Activated naive CD4-positive, alpha-beta T cell treated with anti-CD3 and anti-CD28 coated beads for 36 hours (primary cell): ENCODE measurements at regions of chr21 and their contacts with region 1.

Region 1: DNA sequence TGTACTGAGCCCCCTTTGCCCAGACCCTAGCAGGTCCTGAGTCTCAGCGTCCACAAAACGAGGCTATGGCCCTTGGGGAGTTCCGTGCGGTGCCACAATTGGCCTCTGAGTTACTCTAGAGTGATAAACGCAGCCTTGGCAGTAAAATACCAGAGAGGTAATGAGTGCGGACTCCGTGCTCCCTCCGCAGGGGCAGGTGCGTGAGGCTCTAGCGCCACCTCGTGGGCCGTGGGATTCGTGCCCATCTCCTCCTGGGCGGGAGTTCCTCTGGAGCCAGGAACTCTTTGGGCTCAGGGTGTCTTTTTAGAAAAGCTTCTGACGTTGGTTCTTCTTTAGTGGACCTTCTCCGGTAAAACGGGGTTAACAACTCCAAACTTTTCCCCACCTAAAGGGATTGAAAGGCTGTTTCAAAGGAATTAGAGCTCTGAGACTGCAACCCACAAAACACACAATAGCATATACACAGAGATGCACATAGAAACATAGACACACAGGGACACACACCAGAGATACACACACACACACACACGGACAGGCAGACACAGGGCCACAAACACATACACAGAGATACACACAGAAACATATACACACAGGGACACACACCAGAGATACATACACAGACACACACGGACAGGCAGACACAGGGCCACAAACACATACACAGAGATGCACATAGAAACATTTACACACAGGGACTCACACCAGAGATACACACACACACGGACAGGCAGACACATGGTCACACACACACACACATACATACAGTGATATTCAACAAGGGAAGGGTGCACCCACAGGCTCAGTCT is 99.4 kb downstream of the KCNJ15 start:
- DNase-seq: peak; percentile 84
- H3K4me3 Mint-ChIP-seq: no peak overlapping the region
- H3K27ac Mint-ChIP-seq: no peak overlapping the region
- H3K4me1 Mint-ChIP-seq: peaks cover 16% of the 10 kb centered on the region
- H3K27me3 Mint-ChIP-seq: peaks cover 2% of the 10 kb centered on the region

Region 2: GRCh38 chr21:37700641-37701202 is 655.5 kb before region 1 on chr21:
- CTCF ChIA-PET with region 1: interaction called, 3 read pairs
- intact Hi-C with region 1: loop called (anchors 1 kb)
- DNase-seq: peak; percentile 20
- H3K4me3 Mint-ChIP-seq: no peak overlapping the region
- H3K27ac Mint-ChIP-seq: no peak overlapping the region
- H3K4me1 Mint-ChIP-seq: no peaks in the 10 kb centered on the region
- H3K27me3 Mint-ChIP-seq: peaks cover 9% of the 10 kb centered on the region

Region 3: DNA sequence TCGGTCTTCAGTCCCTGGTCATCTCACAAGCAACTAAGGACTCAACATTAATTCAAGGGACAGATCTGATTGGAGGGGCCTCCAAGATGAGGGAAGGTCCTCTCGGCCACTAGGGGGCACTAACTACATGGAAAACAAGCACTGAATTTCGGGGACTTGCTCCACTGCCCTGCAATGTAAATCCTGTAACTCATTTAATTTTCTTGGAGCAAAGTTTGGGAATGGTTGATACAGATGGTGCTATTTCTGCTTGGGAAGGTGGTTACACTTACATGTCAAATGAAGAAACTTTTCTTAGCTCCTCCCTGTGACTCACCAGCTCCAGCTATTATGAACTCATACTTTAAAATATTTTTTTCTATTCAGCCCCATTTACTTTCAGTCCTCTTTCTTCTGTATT is 196.8 kb before region 1 on chr21:
- CTCF ChIA-PET with region 1: interaction called, 134 read pairs
- intact Hi-C with region 1: loop called (anchors 1 kb)
- DNase-seq: peak; percentile 76
- H3K4me3 Mint-ChIP-seq: no peak overlapping the region
- H3K27ac Mint-ChIP-seq: no peak overlapping the region
- H3K4me1 Mint-ChIP-seq: no peaks in the 10 kb centered on the region
- H3K27me3 Mint-ChIP-seq: peaks cover 16% of the 10 kb centered on the region

Region 4: GRCh38 chr21:38208118-38208517 is 148.1 kb before region 1 on chr21:
- CTCF ChIA-PET with region 1: interaction called, 127 read pairs
- intact Hi-C with region 1: no loop called
- DNase-seq: no peak
- H3K4me3 Mint-ChIP-seq: no peak overlapping the region
- H3K27ac Mint-ChIP-seq: no peak overlapping the region
- H3K4me1 Mint-ChIP-seq: peaks cover 4% of the 10 kb centered on the region
- H3K27me3 Mint-ChIP-seq: peaks cover 15% of the 10 kb centered on the region

Region 5: DNA sequence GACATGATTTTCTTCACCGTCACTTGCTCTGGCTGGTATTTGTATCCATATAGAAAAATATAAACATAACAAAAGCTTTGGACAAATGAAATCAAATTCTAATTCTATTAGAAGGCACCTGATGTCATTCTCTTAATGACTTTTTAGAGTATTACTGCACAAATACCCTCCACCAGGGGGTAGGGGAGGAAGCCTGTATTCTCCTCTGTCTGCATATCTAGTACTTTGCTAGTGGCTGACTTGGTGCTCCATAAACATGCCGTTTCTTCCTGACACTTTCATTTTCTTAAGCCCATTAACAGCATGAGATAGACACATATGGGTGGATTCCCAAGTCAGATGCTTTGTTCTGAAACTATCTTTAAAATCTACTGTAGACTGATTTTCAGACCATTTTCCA is 120.0 kb before region 1 on chr21:
- CTCF ChIA-PET with region 1: interaction called, 10 read pairs
- intact Hi-C with region 1: no loop called
- DNase-seq: no peak
- H3K4me3 Mint-ChIP-seq: no peak overlapping the region
- H3K27ac Mint-ChIP-seq: no peak overlapping the region
- H3K4me1 Mint-ChIP-seq: no peaks in the 10 kb centered on the region
- H3K27me3 Mint-ChIP-seq: no peaks in the 10 kb centered on the region

Region 6: GRCh38 chr21:38277501-38278131 is 78.6 kb before region 1 on chr21:
- CTCF ChIA-PET with region 1: interaction called, 8 read pairs
- intact Hi-C with region 1: loop called (anchors 1 kb)
- DNase-seq: peak; percentile 63
- H3K4me3 Mint-ChIP-seq: no peak overlapping the region
- H3K27ac Mint-ChIP-seq: peak overlapping the region; percentile 13
- H3K4me1 Mint-ChIP-seq: peaks cover 17% of the 10 kb centered on the region
- H3K27me3 Mint-ChIP-seq: no peaks in the 10 kb centered on the region

Region 7: DNA sequence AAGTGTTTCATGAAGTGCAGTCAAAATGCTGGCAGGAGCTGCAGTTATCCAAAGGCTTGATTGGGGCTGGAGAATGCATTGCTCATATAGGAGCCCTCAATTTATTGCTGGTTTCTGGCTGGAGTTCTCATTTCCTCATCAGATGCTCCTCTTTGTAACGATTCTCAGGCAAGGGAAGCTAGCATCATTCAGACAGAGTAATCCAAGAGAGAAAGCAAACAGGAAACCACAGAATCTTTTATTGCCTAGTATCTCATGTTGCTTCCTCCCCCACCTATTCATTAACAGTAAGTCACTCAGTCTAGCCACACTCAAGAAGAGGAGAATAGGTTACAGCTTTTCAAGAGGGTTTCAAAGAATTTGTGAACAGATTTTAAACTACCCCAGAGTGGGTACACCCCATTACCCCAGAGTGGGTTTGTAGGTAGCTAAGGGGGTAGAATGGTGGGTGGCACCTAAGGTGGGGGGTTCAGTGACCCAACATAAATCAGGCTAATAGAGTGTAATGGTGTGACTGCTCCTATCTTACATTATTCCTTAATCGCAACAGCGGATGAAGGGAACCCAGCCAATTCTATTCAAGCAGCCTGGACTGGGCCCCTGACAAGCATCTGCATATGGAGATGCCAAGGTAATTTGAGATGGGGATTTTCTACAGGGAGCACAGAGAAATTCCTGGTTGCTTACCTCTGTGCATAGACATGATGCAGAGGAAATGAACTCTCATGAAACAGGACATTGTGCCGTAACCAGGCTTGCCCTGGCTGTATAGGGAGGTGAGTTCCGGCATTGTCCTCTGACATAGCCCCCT is 32.3 kb before region 1 on chr21:
- CTCF ChIA-PET with region 1: interaction called, 16 read pairs
- intact Hi-C with region 1: loop called (anchors 2 kb)
- DNase-seq: no peak
- H3K4me3 Mint-ChIP-seq: no peak overlapping the region
- H3K27ac Mint-ChIP-seq: peak overlapping the region; percentile 17
- H3K4me1 Mint-ChIP-seq: peaks cover 36% of the 10 kb centered on the region
- H3K27me3 Mint-ChIP-seq: no peaks in the 10 kb centered on the region

Region 8: DNA sequence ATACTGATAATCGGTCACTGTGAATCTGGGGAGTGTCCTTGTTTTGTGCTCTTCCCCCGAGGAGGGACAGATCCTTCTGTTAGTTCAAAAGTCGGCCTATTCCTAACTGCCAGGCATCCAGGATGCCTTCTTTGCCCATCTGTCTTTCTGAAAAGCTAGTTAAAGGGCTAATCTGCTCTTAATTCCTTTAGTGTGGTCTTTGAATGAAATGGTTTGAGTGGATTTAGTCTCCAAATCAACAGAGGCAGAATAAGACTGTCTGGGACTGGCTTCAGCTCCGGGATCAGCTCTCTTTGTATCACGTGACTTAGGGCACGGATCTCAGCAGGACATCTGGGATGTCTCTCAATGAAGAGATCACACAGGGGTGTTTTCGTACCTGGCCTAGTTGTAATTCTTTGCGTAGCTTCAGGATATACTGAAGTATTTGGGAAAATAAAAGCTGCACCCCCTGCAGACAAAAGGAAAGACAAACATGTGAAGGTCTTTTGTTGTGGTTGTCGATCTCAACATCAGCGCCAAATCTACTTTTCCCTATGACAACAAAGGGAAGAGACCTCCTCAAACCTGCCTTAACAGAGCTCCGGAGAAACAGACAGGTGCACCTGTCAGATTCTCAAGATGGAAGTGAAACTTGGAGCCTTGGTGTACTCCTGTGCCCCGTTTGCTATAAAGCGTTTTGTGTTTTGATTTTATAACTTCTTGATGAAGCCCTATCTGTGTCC is 44.2 kb after region 1 on chr21:
- CTCF ChIA-PET with region 1: no interaction called
- intact Hi-C with region 1: no loop called
- DNase-seq: no peak
- H3K4me3 Mint-ChIP-seq: no peak overlapping the region
- H3K27ac Mint-ChIP-seq: no peak overlapping the region
- H3K4me1 Mint-ChIP-seq: no peaks in the 10 kb centered on the region
- H3K27me3 Mint-ChIP-seq: peaks cover 27% of the 10 kb centered on the region

Region 9: GRCh38 chr21:38460171-38460742 is 104.1 kb after region 1 on chr21:
- CTCF ChIA-PET with region 1: no interaction called
- intact Hi-C with region 1: no loop called
- DNase-seq: no peak
- H3K4me3 Mint-ChIP-seq: no peak overlapping the region
- H3K27ac Mint-ChIP-seq: no peak overlapping the region
- H3K4me1 Mint-ChIP-seq: no peaks in the 10 kb centered on the region
- H3K27me3 Mint-ChIP-seq: no peaks in the 10 kb centered on the region